OCI-LY7 (cell line): ENCODE measurements at regions of chr4 and their contacts with region 1.

Region 1: GRCh38 chr4:139560406-139561104 is 4.5 kb upstream of the SETD7 start:
- DNase-seq: peak; percentile 86
- H3K4me3 ChIP-seq: peak overlapping the region; percentile 59
- H3K27ac ChIP-seq: peak overlapping the region; percentile 87
- H3K4me1 ChIP-seq: peaks cover 43% of the 10 kb centered on the region
- CTCF ChIP-seq: no peak

Region 2: GRCh38 chr4:139076016-139076744 is 484.4 kb before region 1 on chr4:
- CTCF ChIA-PET with region 1: interaction called, 14 read pairs
- POLR2A ChIA-PET with region 1: no interaction called
- intact Hi-C with region 1: no loop called
- DNase-seq: no peak
- H3K4me3 ChIP-seq: no peak overlapping the region
- H3K27ac ChIP-seq: no peak overlapping the region
- H3K4me1 ChIP-seq: peaks cover 4% of the 10 kb centered on the region
- CTCF ChIP-seq: no peak

Region 3: DNA sequence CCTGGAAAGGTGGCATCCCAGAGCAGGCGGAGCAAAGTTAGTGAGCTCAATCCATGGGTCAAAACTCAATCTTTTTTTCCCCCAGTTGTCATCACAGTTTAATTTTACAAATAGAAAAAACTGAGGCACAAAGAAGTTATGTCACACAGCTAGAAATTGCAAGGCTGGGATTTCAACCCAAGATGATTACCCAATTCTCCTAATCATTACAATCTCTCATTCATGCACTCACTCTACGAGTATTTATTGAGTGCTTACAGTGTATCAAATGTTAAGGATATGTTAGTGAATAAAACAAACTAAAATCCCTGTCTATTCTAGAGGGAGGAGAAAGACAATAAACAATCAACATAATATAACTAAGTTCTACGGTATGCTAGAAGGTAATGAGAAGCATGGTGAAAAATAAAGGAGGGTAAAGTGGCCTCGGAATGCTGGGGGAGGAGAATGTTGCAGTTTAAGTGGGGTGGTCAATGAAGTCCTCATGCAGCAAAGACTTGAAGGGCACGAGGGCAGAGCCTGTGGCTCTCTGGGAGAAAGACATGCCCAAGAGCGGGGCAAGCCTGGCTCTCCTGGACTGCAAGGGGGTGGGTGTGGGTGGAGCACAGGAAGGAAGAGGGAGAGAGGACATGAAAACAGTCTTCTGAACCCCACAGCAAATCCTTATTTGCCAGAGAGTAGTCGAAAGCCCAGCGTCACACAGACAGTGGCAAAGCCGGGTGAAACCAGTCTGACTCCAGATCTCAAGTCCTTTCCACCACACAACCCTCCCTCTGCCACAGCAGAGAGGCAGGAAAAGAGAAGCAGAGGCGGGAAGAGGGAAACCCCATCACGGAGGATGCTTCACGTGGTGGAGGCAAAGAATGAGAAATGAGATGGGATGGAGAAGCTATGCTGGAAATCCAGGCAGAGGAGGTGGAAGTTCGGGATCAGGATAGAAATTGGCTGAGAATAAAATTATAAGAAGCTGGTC is 58.3 kb before region 1 on chr4:
- CTCF ChIA-PET with region 1: no interaction called
- POLR2A ChIA-PET with region 1: interaction called, 4 read pairs
- intact Hi-C with region 1: loop called (anchors 2 kb)
- DNase-seq: no peak
- H3K4me3 ChIP-seq: no peak overlapping the region
- H3K27ac ChIP-seq: no peak overlapping the region
- H3K4me1 ChIP-seq: no peaks in the 10 kb centered on the region
- CTCF ChIP-seq: no peak

Region 4: DNA sequence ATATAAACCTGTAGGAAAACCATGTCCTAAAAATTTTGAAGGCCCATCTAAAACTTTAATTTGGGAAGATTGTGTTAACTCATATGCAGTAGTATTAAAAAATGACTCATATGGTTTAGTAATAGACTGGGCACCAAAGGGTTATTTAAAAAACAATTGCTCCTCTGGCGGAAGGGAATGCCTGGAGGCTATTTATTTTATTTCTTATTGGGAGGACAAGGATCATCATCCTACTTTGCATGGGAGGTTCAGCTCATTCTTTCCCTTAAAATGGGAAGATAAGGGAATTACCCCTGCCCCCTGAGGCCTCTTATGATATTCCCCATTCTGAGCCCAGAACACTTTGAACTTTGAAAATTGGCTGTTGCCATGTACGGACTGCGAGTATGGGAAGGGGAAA is 75.4 kb after region 1 on chr4:
- CTCF ChIA-PET with region 1: no interaction called
- POLR2A ChIA-PET with region 1: no interaction called
- intact Hi-C with region 1: no loop called
- DNase-seq: no peak
- H3K4me3 ChIP-seq: no peak overlapping the region
- H3K27ac ChIP-seq: no peak overlapping the region
- H3K4me1 ChIP-seq: no peaks in the 10 kb centered on the region
- CTCF ChIP-seq: no peak